HAP-1 (cell line): ENCODE measurements at regions of chr20 and their contacts with region 1.

Region 1: GRCh38 chr20:59403261-59403961 is 103.0 kb downstream of the EDN3 start:
- DNase-seq: peak; percentile 32 to 83
- H3K4me3 ChIP-seq: peak overlapping the region; percentile 9
- H3K4me1 ChIP-seq: peaks cover 5% of the 10 kb centered on the region; the same call in 1 of the 2 replicates
- H3K27me3 ChIP-seq: peaks cover 11% of the 10 kb centered on the region; the same call in 1 of the 2 replicates

Region 2: GRCh38 chr20:58870239-58871014 is 533.0 kb before region 1 on chr20:
- in situ Hi-C with region 1: loop called (anchors 10 kb)
- DNase-seq: peak; percentile 67 to 87
- H3K4me3 ChIP-seq: no peak overlapping the region
- H3K4me1 ChIP-seq: peaks cover 5% of the 10 kb centered on the region
- H3K27me3 ChIP-seq: 0 out of 2 replicates have a peak, but pooled peaks cover 2% of the 10 kb centered on the region

Region 3: DNA sequence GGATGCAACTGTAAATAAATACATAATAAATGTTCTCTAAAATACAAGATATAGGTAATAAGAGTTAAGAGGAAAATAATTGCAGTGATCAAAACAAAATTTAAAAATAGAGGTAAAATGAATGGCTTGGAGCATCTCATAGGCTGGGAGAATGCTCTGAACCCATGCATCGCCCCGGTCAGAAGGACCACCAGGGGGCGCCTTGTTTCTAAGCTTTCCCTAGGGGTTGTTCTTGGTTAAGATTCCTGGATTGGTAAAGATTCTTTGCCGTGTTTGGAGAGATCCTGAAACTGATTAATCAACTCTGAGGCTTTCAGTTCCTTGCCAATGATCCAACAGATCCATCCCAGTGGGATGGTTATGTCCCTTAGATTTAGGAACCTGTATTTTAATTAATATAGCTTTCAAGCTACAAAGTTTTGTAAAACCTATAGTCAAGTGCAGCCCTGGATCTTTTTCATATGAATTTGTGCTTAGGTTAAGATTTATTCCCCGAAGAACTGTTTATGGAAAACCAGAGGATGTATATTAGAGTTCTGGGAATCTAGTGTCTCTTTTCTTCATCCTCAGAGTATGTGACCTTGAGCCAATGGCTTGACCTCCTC is 315.5 kb before region 1 on chr20:
- in situ Hi-C with region 1: loop called (anchors 25 kb)
- DNase-seq: peak; percentile 54 to 85
- H3K4me3 ChIP-seq: no peak overlapping the region
- H3K4me1 ChIP-seq: no peaks in the 10 kb centered on the region
- H3K27me3 ChIP-seq: peaks cover 19% of the 10 kb centered on the region

Region 4: DNA sequence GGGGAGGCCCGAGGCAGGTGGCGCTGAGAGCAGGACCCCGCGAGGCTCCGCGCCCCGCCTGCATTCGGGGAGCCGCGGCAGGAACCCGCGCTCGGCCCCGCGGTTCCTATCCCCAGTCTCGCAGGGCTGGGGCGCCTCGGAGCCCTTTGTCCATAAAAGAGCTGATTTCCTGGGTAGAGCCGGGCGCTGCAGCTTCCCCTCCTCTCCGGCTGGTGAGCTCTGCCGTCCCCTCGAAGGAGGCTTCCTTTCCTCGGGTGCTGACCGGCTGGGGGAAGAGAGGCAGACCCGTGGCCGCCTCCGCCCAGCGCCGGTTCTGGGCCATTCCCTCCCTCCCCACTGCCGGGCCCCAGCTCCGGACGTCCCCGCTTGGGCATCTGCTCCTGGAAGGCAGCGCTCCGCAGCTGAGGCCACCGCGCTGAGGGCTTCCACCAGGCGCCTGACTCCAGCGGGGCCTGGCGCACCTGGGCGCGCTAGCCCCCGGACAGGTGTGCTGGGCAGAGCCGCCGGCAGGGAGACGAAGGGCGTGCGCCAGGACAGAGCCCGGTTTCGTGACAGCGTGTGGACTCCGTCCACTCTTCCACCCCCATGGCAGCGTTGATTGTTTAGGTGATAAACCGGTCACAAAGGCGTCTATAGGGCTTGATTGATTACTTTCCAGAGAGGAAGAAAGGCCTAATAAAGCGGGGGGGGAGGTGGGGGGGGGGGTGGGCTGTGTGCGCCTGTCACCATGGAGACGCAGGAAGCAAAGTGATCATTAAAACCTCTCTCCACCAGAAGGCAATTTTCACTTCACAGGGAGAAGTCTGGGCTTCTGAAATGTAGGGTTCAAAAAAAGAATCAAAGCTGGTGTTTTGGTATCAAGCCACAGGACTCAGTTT is 202.0 kb after region 1 on chr20:
- in situ Hi-C with region 1: no loop called
- DNase-seq: no peak
- H3K4me3 ChIP-seq: no peak overlapping the region
- H3K4me1 ChIP-seq: no peaks in the 10 kb centered on the region
- H3K27me3 ChIP-seq: peaks cover 14% of the 10 kb centered on the region

Region 5: DNA sequence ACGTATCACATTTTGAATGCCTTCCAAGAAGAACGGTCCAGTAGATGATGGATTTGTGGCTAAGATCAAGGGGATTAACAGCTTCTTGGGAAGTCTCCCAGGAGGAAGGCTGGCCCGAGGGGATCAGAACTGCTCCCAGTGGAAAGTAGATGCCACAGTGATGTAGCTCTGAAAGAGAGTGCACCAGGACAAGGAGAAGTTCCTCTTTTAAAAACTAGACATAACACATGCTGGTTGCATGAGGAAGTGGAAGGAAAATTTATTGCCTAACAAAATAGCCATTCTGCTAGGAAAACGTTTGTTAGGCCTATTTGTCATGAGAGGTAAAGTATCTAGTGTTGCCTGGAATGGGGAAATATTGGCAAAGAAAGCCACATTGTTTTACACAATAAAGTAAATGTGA is 642.6 kb after region 1 on chr20:
- in situ Hi-C with region 1: no loop called
- DNase-seq: no peak
- H3K4me3 ChIP-seq: no peak overlapping the region
- H3K4me1 ChIP-seq: no peaks in the 10 kb centered on the region
- H3K27me3 ChIP-seq: no peaks in the 10 kb centered on the region